AG04450 (cell line): ENCODE measurements at regions of chr4 and their contacts with region 1.

Region 1: DNA sequence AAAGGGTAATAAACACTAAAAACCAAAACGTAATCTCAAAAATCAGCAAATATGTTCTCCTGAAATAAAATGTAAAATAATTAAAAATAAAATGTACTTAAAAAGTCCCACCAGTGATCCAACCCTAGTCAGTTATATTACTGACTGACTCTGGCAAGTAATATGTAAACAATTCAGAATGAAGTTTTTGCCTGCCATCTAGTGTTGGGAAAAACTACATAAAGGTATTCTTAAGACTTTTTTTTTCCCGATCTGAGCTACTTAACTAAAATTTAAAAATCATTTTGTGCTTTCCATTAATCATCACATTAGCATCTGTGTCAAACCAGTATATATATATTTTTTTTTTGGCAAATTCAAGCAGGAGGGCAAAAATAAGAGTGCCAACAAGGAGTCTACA is 24.0 kb downstream of the RCHY1 start:
- DNase-seq: peak; percentile 7
- H3K4me3 ChIP-seq: no peak overlapping the region
- H3K27ac ChIP-seq: no peak overlapping the region
- H3K27me3 ChIP-seq: no peaks in the 10 kb centered on the region
- CTCF ChIP-seq: peak; percentile 40

Region 2: GRCh38 chr4:75469896-75470295 is 20.3 kb before region 1 on chr4:
- CTCF ChIA-PET with region 1: interaction called, 10 read pairs
- POLR2A ChIA-PET with region 1: no interaction called
- DNase-seq: no peak
- H3K4me3 ChIP-seq: no peak overlapping the region
- H3K27ac ChIP-seq: no peak overlapping the region
- H3K27me3 ChIP-seq: no peaks in the 10 kb centered on the region
- CTCF ChIP-seq: no peak

Region 3: DNA sequence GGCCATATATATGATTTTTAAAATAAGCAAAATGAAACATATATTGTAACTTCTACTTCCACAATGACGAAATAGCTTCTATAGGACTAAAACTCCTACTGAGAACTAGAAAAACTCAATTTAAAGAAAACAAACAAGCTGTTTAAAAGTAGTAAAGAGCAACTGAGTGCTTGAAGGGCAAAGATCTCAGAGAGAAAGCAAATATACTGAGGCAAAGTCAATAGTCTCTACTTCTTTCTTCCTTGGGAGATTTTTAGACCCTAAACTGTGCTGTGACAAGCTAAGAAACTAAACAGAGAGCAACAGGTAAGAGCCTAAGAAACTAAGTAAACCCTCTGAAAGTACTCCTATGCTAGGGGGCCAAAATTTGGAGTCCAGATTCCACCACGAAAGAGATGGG is 15.5 kb after region 1 on chr4:
- CTCF ChIA-PET with region 1: no interaction called
- POLR2A ChIA-PET with region 1: no interaction called
- DNase-seq: no peak
- H3K4me3 ChIP-seq: no peak overlapping the region
- H3K27ac ChIP-seq: no peak overlapping the region
- H3K27me3 ChIP-seq: no peaks in the 10 kb centered on the region
- CTCF ChIP-seq: no peak